ENCODE measurements at regions of chr1 and their contacts with region 1.

Region 1: GRCh38 chr1:209207701-209208286 is 375.7 kb upstream of the CAMK1G start:
- DNase-seq: peak; percentile 68
- H3K4me3 ChIP-seq: peak overlapping the region in 1 of 4 donors; percentile 30
- H3K27ac ChIP-seq: no peak overlapping the region
- H3K4me1 ChIP-seq: peaks cover 0 to 19% (median 2%) of the 10 kb centered on the region in 4 donors
- H3K27me3 ChIP-seq: peaks cover 40% of the 10 kb centered on the region
- CTCF ChIP-seq: peak; percentile 66 to 72 (median 67)
- EP300 ChIP-seq: no peak
- POLR2A ChIP-seq: no peak

Region 2: DNA sequence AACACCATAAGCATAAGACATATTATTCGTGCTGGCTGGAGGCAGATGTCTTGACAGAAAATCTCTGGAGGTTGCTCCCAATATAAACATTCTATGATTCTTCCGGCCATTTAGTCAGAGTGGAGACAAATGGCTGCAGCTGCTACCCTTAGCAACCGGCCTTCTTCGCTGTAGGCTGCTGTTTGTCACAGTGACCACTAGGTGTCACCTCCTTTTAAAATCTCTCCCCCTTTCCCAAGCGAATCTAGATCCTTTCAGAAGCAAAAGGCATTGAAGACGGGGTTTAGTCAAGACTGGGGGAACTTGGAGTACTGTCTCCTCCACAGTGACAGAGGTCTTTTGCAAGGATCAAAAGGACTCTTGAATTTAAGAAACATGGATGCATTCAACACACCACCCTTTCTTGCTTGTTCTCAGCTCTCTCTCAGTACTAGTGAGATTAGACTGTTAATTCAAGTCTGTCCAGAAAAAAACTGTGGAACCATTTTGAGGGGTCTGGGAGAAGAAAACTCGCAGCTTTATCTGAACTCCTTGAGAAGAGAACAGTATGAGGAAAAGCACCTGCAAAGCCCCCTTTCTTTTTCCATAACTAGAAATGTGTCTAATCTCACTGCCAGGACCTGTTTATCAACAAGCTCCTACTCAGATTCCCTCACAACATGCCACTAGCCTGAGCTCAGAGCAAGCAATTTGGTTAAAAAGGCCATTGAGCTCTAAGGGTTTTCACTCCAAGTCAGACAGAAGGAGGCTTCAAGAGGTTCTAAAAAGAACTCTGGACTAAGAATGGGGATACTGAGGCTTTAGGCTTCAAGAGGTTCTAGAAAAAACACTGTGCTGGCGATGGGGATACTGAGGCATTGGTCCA is 555.3 kb before region 1 on chr1:
- in situ Hi-C with region 1: loop called (anchors 25 kb)
- intact Hi-C with region 1: loop called (anchors 10 kb)
- DNase-seq: peak; percentile 53
- H3K4me3 ChIP-seq: no peak overlapping the region
- H3K27ac ChIP-seq: no peak overlapping the region
- H3K4me1 ChIP-seq: peaks cover 0 to 5% (median 0%) of the 10 kb centered on the region in 4 donors
- H3K27me3 ChIP-seq: no peaks in the 10 kb centered on the region
- CTCF ChIP-seq: peak; percentile 82 to 90 (median 83)
- EP300 ChIP-seq: no peak
- POLR2A ChIP-seq: no peak

Region 3: GRCh38 chr1:209349363-209350308 is 141.8 kb after region 1 on chr1:
- in situ Hi-C with region 1: no loop called
- intact Hi-C with region 1: loop called (anchors 10 kb)
- DNase-seq: no peak
- H3K4me3 ChIP-seq: no peak overlapping the region
- H3K27ac ChIP-seq: peak overlapping the region in 1 of 4 donors; percentile 30
- H3K4me1 ChIP-seq: no peaks in the 10 kb centered on the region
- H3K27me3 ChIP-seq: no peaks in the 10 kb centered on the region
- CTCF ChIP-seq: no peak
- EP300 ChIP-seq: no peak
- POLR2A ChIP-seq: no peak

Measured in transverse colon (tissue), 4 donors.